GM10248 (cell line): ENCODE measurements at regions of chr9 and their contacts with region 1.

Region 1: GRCh38 chr9:68507130-68507805 is 33.4 kb downstream of the TMEM252 start:
- DNase-seq: peak; percentile 26
- CTCF ChIP-seq: peak; percentile 21

Region 2: GRCh38 chr9:68493958-68494577 is 13.2 kb before region 1 on chr9:
- CTCF ChIA-PET with region 1: interaction called, 13 read pairs
- POLR2A ChIA-PET with region 1: no interaction called
- DNase-seq: no peak
- CTCF ChIP-seq: no peak

Region 3: GRCh38 chr9:68584189-68585033 is 77.1 kb after region 1 on chr9:
- CTCF ChIA-PET with region 1: no interaction called
- POLR2A ChIA-PET with region 1: no interaction called
- DNase-seq: peak; percentile 86
- CTCF ChIP-seq: peak; percentile 99